H1 (cell line): ENCODE measurements at regions of chr9 and their contacts with region 1.

Region 1: GRCh38 chr9:94554439-94555391 is at the start of gene PCAT7:
- DNase-seq: peak; percentile 53 to 80
- H3K4me3 ChIP-seq: peak within 1 kb of the TSS; percentile 57 to 90 (median 78)
- H3K27ac ChIP-seq: peak within 1 kb of the TSS; percentile 83
- H3K4me1 ChIP-seq: peaks cover 0 to 7% (median 2%) of the 10 kb centered on the region in 4 experiments; a peak in 3 of 7 replicates
- H3K27me3 ChIP-seq: no peaks in the 10 kb centered on the region; a peak in 1 of 7 replicates
- CTCF ChIP-seq: peak; percentile 78 to 89 (median 84)
- EP300 ChIP-seq: no peak
- POLR2A ChIP-seq: peak; percentile 91 to 94
- RAD21 ChIP-seq: peak; percentile 84 to 85
- total RNA-seq, gene PCAT7: 2.3 and 3.2 TPM in 2 replicates

Region 2: GRCh38 chr9:94472806-94473360 is 81.8 kb before region 1 on chr9:
- CTCF ChIA-PET with region 1: no interaction called
- POLR2A ChIA-PET with region 1: no interaction called
- DNase-seq: no peak
- H3K4me3 ChIP-seq: no peak overlapping the region
- H3K27ac ChIP-seq: no peak overlapping the region
- H3K4me1 ChIP-seq: no peaks in the 10 kb centered on the region
- H3K27me3 ChIP-seq: no peaks in the 10 kb centered on the region
- CTCF ChIP-seq: no peak
- EP300 ChIP-seq: no peak
- POLR2A ChIP-seq: no peak
- RAD21 ChIP-seq: no peak

Region 3: DNA sequence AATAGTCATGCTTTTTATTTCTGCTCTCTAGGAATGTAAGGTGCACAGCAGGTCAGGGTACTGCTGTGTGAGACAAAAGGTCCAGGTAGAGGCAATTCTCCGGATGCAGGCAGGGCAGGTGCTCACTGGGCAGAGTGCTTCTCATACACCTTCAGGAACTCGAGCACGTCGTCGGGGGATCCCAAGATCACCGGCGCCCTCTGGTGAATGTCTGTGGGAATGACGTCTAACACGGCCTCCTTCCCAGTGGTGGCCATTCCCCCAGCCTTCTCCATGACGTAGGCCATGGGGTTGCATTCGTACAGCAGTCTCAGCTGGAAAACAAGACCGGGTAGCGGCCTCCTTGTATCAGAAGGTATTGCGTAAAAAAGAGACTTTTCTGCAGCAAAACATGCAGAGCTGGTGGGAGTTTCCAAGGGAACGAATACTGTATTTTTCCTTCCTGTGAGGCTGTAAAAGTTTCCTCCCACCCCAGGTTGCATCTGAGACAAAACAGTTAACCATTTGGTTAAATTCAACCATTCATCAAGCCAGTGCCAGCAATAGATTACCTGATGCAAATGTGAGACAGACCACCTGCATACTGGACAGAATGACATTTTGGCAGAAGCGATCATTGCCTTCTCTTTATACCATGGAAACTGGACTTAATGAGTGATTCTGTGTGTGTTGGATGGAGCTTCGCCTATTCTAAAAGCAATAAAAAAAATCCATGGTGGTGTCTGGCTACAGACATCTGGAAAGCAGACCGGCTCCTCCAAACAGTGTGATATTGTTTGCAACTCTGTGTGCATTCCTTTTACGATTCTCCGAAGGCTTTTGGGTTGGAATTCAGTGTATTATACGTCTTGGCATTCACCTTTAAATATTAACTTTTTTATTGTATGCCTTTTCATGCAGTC is 48.8 kb after region 1 on chr9:
- CTCF ChIA-PET with region 1: interaction called, 54 read pairs
- POLR2A ChIA-PET with region 1: interaction called, 43 read pairs
- DNase-seq: peak; percentile 64 to 95
- H3K4me3 ChIP-seq: no peak overlapping the region
- H3K27ac ChIP-seq: no peak overlapping the region
- H3K4me1 ChIP-seq: peaks cover 5 to 8% (median 6%) of the 10 kb centered on the region in 4 experiments; a peak in 6 of 7 replicates
- H3K27me3 ChIP-seq: no peaks in the 10 kb centered on the region; a peak in 1 of 7 replicates
- CTCF ChIP-seq: peak; percentile 84 to 92 (median 84)
- EP300 ChIP-seq: no peak
- POLR2A ChIP-seq: no peak
- RAD21 ChIP-seq: peak; percentile 92 to 93